ENCODE measurements at regions of chr2 and their contacts with region 1.

Region 1: DNA sequence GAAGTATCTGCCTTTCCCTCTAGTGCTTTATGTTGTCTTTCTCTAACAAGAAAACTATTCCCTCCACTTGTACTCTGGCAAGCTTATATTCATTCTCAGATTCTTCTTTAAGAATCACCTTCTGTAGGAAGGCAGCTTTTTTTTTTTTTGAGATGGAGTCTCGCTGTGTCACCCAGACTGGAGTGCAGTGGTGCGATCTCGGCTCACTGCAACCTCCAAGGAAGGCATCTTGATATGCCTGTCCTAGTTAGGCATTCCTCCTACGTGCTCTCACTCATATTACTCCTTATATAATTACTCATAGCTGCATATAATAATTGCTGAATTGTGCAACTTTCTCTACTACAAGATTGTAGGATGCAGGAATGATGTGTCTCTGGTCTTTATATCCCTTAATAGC is 15.8 kb downstream of the NDUFS1 start:
- DNase-seq: no peak
- H3K4me3 ChIP-seq: no peak overlapping the region
- H3K27ac ChIP-seq: no peak overlapping the region
- H3K4me1 ChIP-seq: no peaks in the 10 kb centered on the region
- H3K27me3 ChIP-seq: no peaks in the 10 kb centered on the region

Region 2: GRCh38 chr2:205868773-205869333 is 274.6 kb before region 1 on chr2:
- CTCF ChIA-PET with region 1: no interaction called
- POLR2A ChIA-PET with region 1: no interaction called
- DNase-seq: peak; percentile 73 to 96 (median 94)
- H3K4me3 ChIP-seq: peak overlapping the region in 3 of 7 experiments; percentile 15 to 27 (median 19)
- H3K27ac ChIP-seq: no peak overlapping the region
- H3K4me1 ChIP-seq: peaks cover 3 to 19% (median 15%) of the 10 kb centered on the region in 4 experiments
- H3K27me3 ChIP-seq: no peaks in the 10 kb centered on the region

Region 3: DNA sequence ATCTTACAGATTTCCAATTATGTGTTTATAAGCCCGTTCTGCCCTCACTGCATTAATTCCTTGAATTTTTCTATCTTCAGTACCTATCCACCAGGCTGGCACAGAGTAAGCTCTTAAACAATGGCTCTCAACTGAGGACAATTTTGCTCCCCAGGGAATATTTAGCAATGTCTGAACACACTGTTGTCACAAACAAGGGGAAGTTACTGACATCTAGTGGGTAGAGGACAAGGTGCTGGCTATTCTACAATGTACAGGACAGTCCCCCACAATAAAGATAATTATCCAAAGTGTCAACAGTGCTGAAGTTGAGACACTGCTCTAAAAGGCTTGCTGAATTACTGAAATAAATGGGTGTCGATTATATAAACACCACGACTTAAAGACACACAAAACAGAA is 10.7 kb after region 1 on chr2:
- CTCF ChIA-PET with region 1: interaction called, 16 read pairs
- POLR2A ChIA-PET with region 1: no interaction called
- DNase-seq: peak; percentile 20
- H3K4me3 ChIP-seq: no peak overlapping the region
- H3K27ac ChIP-seq: no peak overlapping the region
- H3K4me1 ChIP-seq: peaks cover 0 to 14% (median 9%) of the 10 kb centered on the region in 4 experiments
- H3K27me3 ChIP-seq: no peaks in the 10 kb centered on the region

Measured in common myeloid progenitor, CD34-positive (primary cell).